ENCODE measurements at regions of chr6 and their contacts with region 1.

Region 1: GRCh38 chr6:42260972-42261371 is 43.3 kb upstream of the MRPS10 start:
- DNase-seq: peak; percentile 85

Region 2: DNA sequence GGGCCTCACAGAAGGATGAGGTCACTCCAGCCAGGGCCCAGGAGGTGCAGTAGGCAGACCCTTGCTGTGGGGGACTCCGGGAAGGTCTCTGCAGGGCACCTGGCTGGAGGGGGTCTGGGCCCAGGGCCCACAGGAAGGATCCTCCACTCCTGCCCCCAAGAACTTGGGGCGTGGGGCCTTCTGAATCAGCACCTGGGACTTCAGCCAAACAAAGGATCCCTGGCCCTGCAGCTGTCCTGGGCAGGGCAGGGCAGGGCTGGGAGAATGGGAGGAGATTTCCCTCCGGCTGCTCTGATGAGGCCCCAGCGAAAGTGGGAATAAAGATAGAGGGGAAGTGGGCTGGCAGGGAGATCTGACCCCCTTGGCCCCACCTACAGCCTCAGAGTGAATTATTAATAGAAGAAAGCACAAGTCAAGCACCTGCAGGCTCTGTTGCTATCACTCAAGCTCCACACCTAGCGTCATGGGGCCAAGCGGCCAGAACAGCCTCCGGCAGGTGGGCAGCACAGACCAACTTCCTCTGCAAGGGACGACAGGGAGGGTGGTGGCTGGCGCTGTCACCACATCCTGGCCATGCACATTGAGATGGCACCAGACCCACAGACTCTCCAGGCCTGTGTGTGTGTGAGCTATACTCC is 18.3 kb after region 1 on chr6:
- intact Hi-C with region 1: no loop called
- DNase-seq: peak; percentile 82

Region 3: GRCh38 chr6:42532038-42532669 is 271.2 kb after region 1 on chr6:
- intact Hi-C with region 1: loop called in 1 of 2 experiments (anchors 10 kb)
- DNase-seq: no peak

Measured in posterior vena cava (tissue), 2 donors.